CD4-positive, alpha-beta T cell (primary cell): ENCODE measurements at regions of chr17 and their contacts with region 1.

Region 1: GRCh38 chr17:66906321-66907278 is 57.9 kb upstream of the CACNG4 start:
- DNase-seq: peak; percentile 38 to 79 (median 50)
- ATAC-seq: peak; percentile 56
- H3K4me3 ChIP-seq: no peak overlapping the region
- H3K4me3 Mint-ChIP-seq: no peak overlapping the region
- H3K27ac ChIP-seq: no peak overlapping the region
- H3K27ac Mint-ChIP-seq: no peak overlapping the region
- H3K4me1 ChIP-seq: peaks cover 5% of the 10 kb centered on the region
- H3K4me1 Mint-ChIP-seq: peaks cover 5% of the 10 kb centered on the region
- H3K27me3 ChIP-seq: peaks cover 0 to 2% of the 10 kb centered on the region in 2 experiments
- H3K27me3 Mint-ChIP-seq: no peaks in the 10 kb centered on the region
- CTCF ChIP-seq: peak; percentile 90

Region 2: GRCh38 chr17:66191593-66192382 is 714.8 kb before region 1 on chr17 and contains the start of gene CEP112:
- CTCF ChIA-PET with region 1: no interaction called
- POLR2A ChIA-PET with region 1: no interaction called
- intact Hi-C with region 1: loop called in 1 of 2 experiments (anchors 1 kb)
- DNase-seq: peak; percentile 79 to 97 (median 87)
- ATAC-seq: peak; percentile 85
- H3K4me3 ChIP-seq: peak within 1 kb of the TSS; percentile 61
- H3K4me3 Mint-ChIP-seq: peak within 1 kb of the TSS; percentile 92
- H3K27ac ChIP-seq: peak within 1 kb of the TSS; percentile 49 to 50
- H3K27ac Mint-ChIP-seq: peak within 1 kb of the TSS; percentile 86
- H3K4me1 ChIP-seq: peaks cover 11% of the 10 kb centered on the region
- H3K4me1 Mint-ChIP-seq: peaks cover 16% of the 10 kb centered on the region
- H3K27me3 ChIP-seq: no peaks in the 10 kb centered on the region
- H3K27me3 Mint-ChIP-seq: no peaks in the 10 kb centered on the region
- CTCF ChIP-seq: no peak
- total RNA-seq, gene CEP112: 1.6 to 2.2 TPM

Region 3: GRCh38 chr17:66567234-66568170 is 339.1 kb before region 1 on chr17:
- CTCF ChIA-PET with region 1: no interaction called
- POLR2A ChIA-PET with region 1: no interaction called
- intact Hi-C with region 1: loop called in 1 of 2 experiments (anchors 5 kb)
- DNase-seq: peak; percentile 71 to 90 (median 80)
- ATAC-seq: peak; percentile 88
- H3K4me3 ChIP-seq: no peak overlapping the region
- H3K4me3 Mint-ChIP-seq: no peak overlapping the region
- H3K27ac ChIP-seq: no peak overlapping the region
- H3K27ac Mint-ChIP-seq: peak overlapping the region; percentile 7
- H3K4me1 ChIP-seq: peaks cover 5% of the 10 kb centered on the region
- H3K4me1 Mint-ChIP-seq: peaks cover 41% of the 10 kb centered on the region
- H3K27me3 ChIP-seq: no peaks in the 10 kb centered on the region
- H3K27me3 Mint-ChIP-seq: no peaks in the 10 kb centered on the region
- CTCF ChIP-seq: peak; percentile 87

Region 4: DNA sequence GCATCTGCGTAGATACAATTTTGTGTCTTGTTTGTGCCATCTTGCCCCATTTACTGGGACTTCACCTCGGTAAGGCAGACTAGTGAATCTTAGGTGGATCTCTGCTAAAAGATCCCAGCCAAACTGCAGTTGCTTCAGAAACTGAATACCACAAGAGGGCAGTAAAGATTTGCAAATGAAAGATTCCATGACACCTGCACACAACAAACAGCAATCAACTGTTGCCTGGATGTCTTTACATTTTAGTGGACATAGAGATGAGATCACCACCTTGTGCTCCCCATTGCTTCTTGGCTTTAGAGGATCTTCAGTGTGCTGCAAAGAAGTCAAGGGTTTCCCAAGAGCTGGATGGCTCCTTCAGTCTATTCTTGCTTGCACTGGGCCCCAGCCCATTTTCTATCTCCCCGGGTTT is 190.8 kb before region 1 on chr17:
- CTCF ChIA-PET with region 1: no interaction called
- POLR2A ChIA-PET with region 1: no interaction called
- intact Hi-C with region 1: loop called (anchors 5 kb)
- DNase-seq: peak in 4 of 14 experiments; percentile 4 to 60 (median 58)
- ATAC-seq: peak; percentile 48
- H3K4me3 ChIP-seq: no peak overlapping the region
- H3K4me3 Mint-ChIP-seq: no peak overlapping the region
- H3K27ac ChIP-seq: no peak overlapping the region
- H3K27ac Mint-ChIP-seq: no peak overlapping the region
- H3K4me1 ChIP-seq: peaks cover 23% of the 10 kb centered on the region
- H3K4me1 Mint-ChIP-seq: peaks cover 34% of the 10 kb centered on the region
- H3K27me3 ChIP-seq: no peaks in the 10 kb centered on the region
- H3K27me3 Mint-ChIP-seq: no peaks in the 10 kb centered on the region
- CTCF ChIP-seq: peak; percentile 66